Dorsolateral prefrontal cortex (tissue), 120 donors: ENCODE measurements at regions of chr15 and their contacts with region 1.

Region 1: DNA sequence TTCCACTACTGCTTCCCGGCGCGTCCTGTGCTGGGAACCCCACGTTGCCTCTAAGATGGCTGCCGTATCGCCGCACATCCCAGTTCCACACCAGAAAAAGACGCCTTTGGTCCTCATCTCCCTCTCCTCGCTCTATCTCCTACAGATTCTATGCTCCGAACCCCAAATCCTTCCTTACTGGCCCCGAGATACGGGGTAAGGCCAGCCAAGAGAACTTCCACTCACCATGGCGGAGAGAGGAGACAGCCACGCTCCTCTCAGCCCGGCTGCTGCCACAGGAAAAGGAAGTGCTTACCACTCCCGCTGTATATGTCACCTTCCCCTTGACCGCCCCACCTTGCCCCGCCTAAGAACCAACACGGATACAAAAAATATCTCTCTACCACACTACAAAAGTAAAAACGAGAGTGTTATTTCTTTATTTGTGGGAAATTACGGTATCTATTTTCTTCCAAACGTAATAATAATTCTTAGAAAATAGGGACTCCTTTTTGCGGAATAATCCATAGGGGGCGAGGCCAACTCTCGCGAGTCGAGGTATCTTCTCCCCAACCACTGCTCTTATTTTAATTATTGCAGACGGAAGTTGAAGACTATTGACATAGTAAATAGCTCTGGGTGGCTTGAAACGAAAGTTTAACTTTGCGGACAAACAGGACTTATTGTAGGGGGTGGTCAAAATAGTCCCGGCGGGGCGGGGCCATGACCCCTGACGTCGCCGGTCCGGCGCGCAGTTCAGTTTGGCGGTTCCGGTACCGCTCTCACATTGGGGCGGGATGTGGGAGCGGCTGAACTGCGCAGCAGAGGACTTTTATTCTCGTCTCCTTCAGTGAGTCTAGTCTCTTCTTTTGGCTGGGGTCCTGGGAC is at the starts of genes RPL4 and ZWILCH:
- DNase-seq: peak; percentile 67 to 83 (median 74)
- H3K4me3 ChIP-seq: peak within 1 kb of the TSS; percentile 62 to 100 (median 92)
- H3K27ac ChIP-seq: peak within 1 kb of the TSS; percentile 6 to 98 (median 95)
- H3K27me3 ChIP-seq: no peaks in the 10 kb centered on the region
- CTCF ChIP-seq: peak in 35 of 56 donors; percentile 4 to 54 (median 27)
- total RNA-seq, gene RPL4: 527 to 1,058 (median 732) TPM
- total RNA-seq, gene ZWILCH: 3.0 to 12.5 (median 6.8) TPM

Region 2: GRCh38 chr15:66356345-66357236 is 148.2 kb before region 1 on chr15 and contains the start of gene TIPIN:
- intact Hi-C with region 1: no loop called
- DNase-seq: peak; percentile 77 to 95 (median 90)
- H3K4me3 ChIP-seq: peak within 1 kb of the TSS; percentile 46 to 80 (median 68)
- H3K27ac ChIP-seq: peak within 1 kb of the TSS in 52 of 59 donors; percentile 1 to 85 (median 62)
- H3K27me3 ChIP-seq: no peaks in the 10 kb centered on the region
- CTCF ChIP-seq: peak in 19 of 56 donors; percentile 0 to 42 (median 21)
- total RNA-seq, gene TIPIN: 5.6 to 21.1 (median 11.3) TPM

Region 3: GRCh38 chr15:66545249-66545648 is 40.5 kb after region 1 on chr15:
- intact Hi-C with region 1: no loop called
- DNase-seq: no peak
- H3K4me3 ChIP-seq: no peak overlapping the region
- H3K27ac ChIP-seq: no peak overlapping the region
- H3K27me3 ChIP-seq: no peaks in the 10 kb centered on the region
- CTCF ChIP-seq: no peak

Region 4: GRCh38 chr15:66566963-66567531 is 62.3 kb after region 1 on chr15:
- intact Hi-C with region 1: loop called in 1 of 2 experiments (anchors 5 kb)
- DNase-seq: peak in 4 of 10 donors; percentile 26 to 58 (median 48)
- H3K4me3 ChIP-seq: peak overlapping the region in 4 of 59 donors; percentile 4 to 17 (median 15)
- H3K27ac ChIP-seq: no peak overlapping the region
- H3K27me3 ChIP-seq: no peaks in the 10 kb centered on the region
- CTCF ChIP-seq: peak; percentile 28 to 79 (median 65)

Region 5: DNA sequence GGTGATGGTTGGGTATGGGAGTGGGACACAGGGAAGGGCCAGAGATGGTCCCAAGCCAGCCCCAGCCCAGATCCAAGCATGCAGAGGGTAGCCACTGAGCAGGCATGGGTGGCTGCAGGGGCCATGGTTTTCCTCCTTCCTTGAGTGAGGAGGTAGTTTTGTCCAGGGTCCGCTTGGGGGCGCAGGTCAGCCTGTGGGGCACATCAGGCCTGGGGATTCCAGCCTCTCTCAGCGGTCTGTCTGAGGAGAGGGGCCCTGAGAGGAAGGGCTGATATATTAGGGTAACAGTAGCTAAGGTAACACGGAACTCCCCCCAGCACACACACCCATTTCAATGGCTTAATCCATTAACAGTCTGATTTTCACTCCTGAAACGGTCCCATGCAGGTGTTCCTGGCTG is 83.7 kb after region 1 on chr15:
- intact Hi-C with region 1: no loop called
- DNase-seq: no peak
- H3K4me3 ChIP-seq: no peak overlapping the region
- H3K27ac ChIP-seq: no peak overlapping the region
- H3K27me3 ChIP-seq: peaks cover 0 to 14% (median 0%) of the 10 kb centered on the region in 45 donors
- CTCF ChIP-seq: no peak

Region 6: DNA sequence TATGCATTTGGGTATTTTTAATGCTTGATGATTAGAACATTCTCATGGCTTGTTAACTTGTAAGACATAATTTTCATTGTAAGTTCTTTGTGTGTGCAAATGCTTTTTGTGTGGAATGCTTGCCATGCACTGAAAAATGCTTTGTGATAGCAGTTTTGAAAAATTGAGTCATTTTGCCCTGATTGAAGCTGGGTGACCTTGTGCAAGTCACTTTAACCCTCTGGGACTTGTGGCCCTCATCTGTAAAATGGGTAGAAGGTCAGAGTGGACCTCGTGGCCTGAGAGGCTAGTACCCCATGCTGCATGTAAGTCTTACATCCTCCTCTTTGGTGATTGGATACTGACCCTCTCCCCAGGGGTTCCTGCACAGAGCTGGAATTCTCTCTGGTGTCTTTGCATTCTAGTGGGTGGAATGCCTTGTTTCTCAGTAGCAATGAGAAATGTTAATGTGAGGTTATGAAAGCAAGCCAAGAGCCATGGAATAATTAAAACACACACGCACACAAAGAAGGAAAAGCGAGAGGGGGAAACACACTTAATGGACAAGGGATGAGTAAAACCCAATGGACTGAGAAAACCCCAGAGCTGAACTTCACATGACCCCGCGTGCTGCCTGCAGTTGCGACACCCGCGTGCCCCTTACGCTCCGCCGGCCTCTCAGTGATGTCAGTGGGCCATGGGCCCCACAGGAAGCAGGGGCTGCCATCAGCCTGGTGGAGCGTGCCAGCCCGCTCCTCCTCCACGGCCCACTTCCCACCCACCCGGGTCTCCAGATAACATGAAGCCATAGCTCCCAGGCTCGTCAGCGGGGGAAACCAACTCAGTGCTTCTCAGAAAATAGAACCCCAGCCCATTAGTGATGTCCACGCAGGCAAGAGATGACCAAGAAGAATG is 604.6 kb after region 1 on chr15:
- intact Hi-C with region 1: no loop called
- DNase-seq: peak in 1 of 10 donors; percentile 49
- H3K4me3 ChIP-seq: no peak overlapping the region
- H3K27ac ChIP-seq: peak overlapping the region in 5 of 59 donors; percentile 6 to 42 (median 13)
- H3K27me3 ChIP-seq: no peaks in the 10 kb centered on the region
- CTCF ChIP-seq: no peak